H1 (cell line): ENCODE measurements at regions of chr1 and their contacts with region 1.

Region 1: DNA sequence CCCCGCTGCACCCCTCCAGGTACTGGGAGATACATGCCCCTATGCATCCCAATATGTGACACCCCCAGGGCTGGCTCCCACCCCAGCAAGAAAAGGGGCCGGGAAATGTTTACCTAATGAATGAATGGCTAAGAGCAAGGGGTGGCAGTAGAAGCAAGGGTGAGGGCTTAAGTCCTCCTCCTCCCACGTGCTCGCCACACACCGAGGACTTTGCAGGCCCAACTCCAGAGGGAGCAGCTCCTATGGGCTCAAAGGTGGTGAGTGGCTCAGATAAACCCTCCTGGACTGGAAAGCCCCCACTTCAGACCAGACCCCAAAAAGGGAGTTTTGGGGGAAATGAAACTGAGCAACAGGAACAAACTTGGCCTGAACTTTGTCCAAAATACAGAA is 11.4 kb downstream of the SLC45A3 start:
- DNase-seq: no peak
- H3K4me3 ChIP-seq: no peak overlapping the region
- H3K27ac ChIP-seq: no peak overlapping the region
- H3K4me1 ChIP-seq: peaks cover 17 to 54% (median 44%) of the 10 kb centered on the region in 4 experiments
- H3K27me3 ChIP-seq: no peaks in the 10 kb centered on the region
- CTCF ChIP-seq: 0 out of 4 replicates have a peak, but pooled peaks of 1 of the 3 experiments have one; percentile 9
- EP300 ChIP-seq: no peak
- POLR2A ChIP-seq: no peak
- RAD21 ChIP-seq: peak in 1 of 2 experiments; percentile 12; a peak in 1 of 4 replicates

Region 2: DNA sequence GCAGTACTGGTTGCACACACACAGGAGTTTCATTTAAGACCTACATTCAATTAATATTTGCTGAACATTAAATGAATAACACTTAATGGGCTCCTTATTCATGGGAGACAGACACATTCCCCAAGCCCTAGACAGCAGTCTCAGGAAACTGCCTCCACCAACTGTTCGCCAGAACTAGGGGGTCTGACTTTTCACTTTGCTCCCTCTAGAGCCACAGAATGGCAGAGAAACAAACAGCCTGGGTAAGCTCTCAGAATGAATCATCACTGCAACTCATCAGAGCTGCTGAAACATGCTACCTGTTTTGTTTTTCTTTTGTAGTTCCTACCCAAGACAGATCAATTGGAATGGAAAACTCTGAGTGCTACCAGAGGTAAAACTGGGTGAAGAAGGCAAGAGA is 68.9 kb before region 1 on chr1:
- CTCF ChIA-PET with region 1: no interaction called
- POLR2A ChIA-PET with region 1: no interaction called
- DNase-seq: no peak
- H3K4me3 ChIP-seq: no peak overlapping the region
- H3K27ac ChIP-seq: no peak overlapping the region
- H3K4me1 ChIP-seq: no peaks in the 10 kb centered on the region
- H3K27me3 ChIP-seq: no peaks in the 10 kb centered on the region
- CTCF ChIP-seq: no peak
- EP300 ChIP-seq: no peak
- POLR2A ChIP-seq: no peak
- RAD21 ChIP-seq: no peak

Region 3: GRCh38 chr1:205688166-205689075 is 19.5 kb after region 1 on chr1:
- CTCF ChIA-PET with region 1: interaction called, 14 read pairs
- POLR2A ChIA-PET with region 1: interaction called, 5 read pairs
- DNase-seq: no peak
- H3K4me3 ChIP-seq: no peak overlapping the region
- H3K27ac ChIP-seq: no peak overlapping the region
- H3K4me1 ChIP-seq: peaks cover 3 to 11% (median 5%) of the 10 kb centered on the region in 4 experiments
- H3K27me3 ChIP-seq: no peaks in the 10 kb centered on the region
- CTCF ChIP-seq: no peak
- EP300 ChIP-seq: no peak
- POLR2A ChIP-seq: no peak
- RAD21 ChIP-seq: no peak

Region 4: GRCh38 chr1:205693421-205693991 is 24.6 kb after region 1 on chr1:
- CTCF ChIA-PET with region 1: interaction called, 12 read pairs
- POLR2A ChIA-PET with region 1: interaction called, 4 read pairs
- DNase-seq: no peak
- H3K4me3 ChIP-seq: no peak overlapping the region
- H3K27ac ChIP-seq: no peak overlapping the region
- H3K4me1 ChIP-seq: peaks cover 4 to 8% (median 5%) of the 10 kb centered on the region in 4 experiments; a peak in 6 of 7 replicates
- H3K27me3 ChIP-seq: no peaks in the 10 kb centered on the region
- CTCF ChIP-seq: no peak
- EP300 ChIP-seq: no peak
- POLR2A ChIP-seq: no peak
- RAD21 ChIP-seq: no peak